Left cardiac atrium (tissue), 4 donors: ENCODE measurements at regions of chr7 and their contacts with region 1.

Region 1: DNA sequence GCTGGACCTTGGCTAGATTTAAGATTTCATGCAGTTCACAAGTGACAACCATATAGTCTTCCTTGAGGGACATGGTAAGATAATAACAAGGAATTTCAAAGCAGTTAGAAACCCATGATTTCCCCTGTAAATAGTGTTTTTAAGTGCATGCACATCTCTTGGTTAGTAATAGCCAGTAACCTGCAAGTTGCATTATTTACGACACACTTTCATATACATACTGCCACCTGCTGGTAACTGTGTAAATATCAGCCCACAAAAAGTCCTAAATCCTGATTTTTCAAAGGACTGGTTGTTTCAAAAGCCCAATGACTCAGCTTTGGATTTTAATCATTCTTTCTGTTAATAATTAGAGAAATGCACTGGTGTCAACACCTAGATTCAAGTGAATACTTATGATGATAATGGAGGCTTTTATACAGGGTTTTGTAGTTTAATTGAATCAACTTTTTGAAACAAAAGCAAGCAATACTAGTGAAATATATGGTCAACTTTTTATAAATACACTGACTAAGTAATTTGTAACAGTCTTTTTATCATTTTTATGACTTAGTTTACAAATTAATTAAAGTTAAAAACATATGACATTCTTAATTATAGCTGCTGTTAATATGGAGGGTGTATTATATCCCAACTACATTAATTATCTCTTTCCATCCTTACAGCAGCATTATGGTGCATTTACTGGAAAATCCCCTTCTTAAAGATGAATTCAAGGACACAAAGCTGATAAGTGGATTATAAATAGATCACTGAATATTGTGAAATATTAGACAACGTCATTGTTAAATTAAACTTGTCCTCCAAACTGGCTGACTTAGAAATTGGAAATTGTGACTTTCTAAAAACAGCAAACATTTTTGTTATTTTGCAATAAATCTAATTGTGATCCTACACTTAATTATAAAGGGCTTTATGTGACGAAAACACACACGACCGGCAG is 367.7 kb upstream of the SEMA3D start:
- DNase-seq: no peak
- ATAC-seq: peak; percentile 44 to 53

Region 2: DNA sequence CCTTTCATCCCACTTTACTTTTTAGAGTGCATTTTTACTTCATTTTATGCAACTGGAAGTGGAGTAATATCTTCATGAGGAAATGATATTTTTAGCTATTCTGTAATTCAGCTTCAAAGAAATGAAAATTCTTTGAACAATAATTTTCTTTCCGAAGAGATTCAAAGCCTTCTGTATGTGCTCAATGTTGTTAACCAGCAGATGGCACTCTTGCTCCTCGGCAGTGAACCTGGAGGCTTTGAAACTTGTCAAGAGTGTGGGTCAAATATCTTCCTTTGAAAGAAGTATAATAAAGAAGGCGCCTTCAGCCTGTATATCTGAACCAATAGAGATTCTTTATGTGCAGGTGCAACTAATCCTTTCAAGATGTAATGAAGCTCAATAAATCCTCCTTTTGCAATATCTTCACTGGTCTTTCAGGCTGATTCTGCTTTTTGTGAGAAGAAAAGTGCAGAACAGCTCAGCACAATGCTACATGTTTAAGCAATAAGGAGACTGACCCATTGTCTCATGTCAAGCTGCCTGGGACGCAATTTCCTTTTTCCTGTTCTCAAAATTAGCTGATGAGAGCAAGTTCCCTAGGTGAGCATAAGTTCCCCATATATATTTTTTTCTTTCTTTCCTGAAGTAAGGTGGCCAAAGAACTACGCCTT is 1618.3 kb before region 1 on chr7:
- intact Hi-C with region 1: loop called in 1 of 2 experiments (anchors 5 kb)
- DNase-seq: peak; percentile 47
- ATAC-seq: peak; percentile 71 to 81

Region 3: DNA sequence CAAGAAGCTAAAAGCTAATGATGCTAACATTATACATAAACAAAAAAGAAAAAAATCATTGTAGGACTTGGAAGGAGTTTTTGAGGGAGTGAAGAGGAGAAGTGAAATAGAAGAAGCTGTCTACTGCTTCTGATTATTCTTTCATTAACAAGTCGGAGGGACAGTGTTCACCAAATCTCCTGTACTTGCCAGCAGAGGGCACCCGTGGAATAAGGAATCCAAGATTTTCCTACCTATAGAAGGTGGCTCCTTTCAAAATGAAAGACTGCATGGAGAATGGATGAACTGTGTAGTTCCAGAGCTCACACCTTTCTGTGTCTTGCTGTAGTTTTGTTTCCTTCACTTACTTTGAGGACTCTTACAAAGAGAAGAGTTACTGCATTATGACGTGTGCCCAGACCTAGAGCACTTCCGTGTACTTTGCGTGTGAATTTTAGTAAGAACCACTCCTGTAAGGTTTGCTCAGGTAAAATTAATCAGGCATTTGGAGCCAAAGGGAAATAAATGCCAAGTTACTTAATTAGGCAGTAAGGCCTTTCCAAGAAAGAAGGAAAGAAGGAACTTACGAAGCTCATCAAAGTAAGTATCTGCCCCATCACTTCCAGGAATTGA is 512.8 kb before region 1 on chr7:
- intact Hi-C with region 1: loop called (anchors 5 to 10 kb)
- DNase-seq: peak; percentile 58
- ATAC-seq: peak; percentile 47 to 73